ENCODE measurements at regions of chrX and their contacts with region 1.

Region 1: GRCh38 chrX:137418099-137418498 is 147.8 kb upstream of the ZIC3 start:
- DNase-seq: no peak
- ATAC-seq: no peak
- H3K4me3 ChIP-seq: no peak overlapping the region
- H3K27ac ChIP-seq: no peak overlapping the region
- H3K4me1 ChIP-seq: no peaks in the 10 kb centered on the region
- H3K27me3 ChIP-seq: no peaks in the 10 kb centered on the region
- CTCF ChIP-seq: no peak
- EP300 ChIP-seq: no peak
- POLR2A ChIP-seq: no peak
- RAD21 ChIP-seq: no peak

Region 2: GRCh38 chrX:137366018-137366633 is 52.0 kb before region 1 on chrX:
- CTCF ChIA-PET with region 1: no interaction called
- POLR2A ChIA-PET with region 1: no interaction called
- RAD21 ChIA-PET with region 1: no interaction called
- SMC1A ChIA-PET with region 1: no interaction called
- in situ Hi-C with region 1: loop called (anchors 5 kb)
- intact Hi-C with region 1: no loop called
- DNase-seq: no peak
- ATAC-seq: no peak
- H3K4me3 ChIP-seq: no peak overlapping the region
- H3K27ac ChIP-seq: no peak overlapping the region
- H3K4me1 ChIP-seq: no peaks in the 10 kb centered on the region
- H3K27me3 ChIP-seq: no peaks in the 10 kb centered on the region
- CTCF ChIP-seq: no peak
- EP300 ChIP-seq: no peak
- POLR2A ChIP-seq: no peak
- RAD21 ChIP-seq: no peak

Measured in GM12878 (cell line).